Caco-2 (cell line): ENCODE measurements at regions of chr17 and their contacts with region 1.

Region 1: DNA sequence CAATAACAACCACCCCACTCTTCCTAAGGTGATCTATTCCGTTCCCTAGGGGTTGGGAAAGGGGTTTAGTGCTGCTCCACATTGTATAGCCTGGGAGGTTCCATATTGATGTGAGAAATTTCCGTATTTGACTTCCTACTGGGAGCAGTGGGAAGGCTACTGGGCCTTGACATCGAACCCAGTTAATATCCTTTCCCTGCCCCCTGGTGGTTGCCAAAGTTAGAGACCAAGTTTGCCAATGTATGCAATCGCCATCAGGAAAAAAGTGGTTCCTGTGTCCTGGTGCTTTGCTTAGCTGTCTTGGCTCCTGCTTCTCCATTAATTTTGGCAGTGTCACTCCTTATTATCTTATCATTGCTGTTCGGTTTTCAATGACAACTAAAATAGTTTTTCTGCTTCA is 914.9 kb downstream of the KCNJ2 start:
- DNase-seq: peak; percentile 56 to 62
- H3K4me3 ChIP-seq: no peak overlapping the region
- H3K4me3 Mint-ChIP-seq: no peak overlapping the region
- H3K27ac Mint-ChIP-seq: no peak overlapping the region
- H3K4me1 ChIP-seq: no peaks in the 10 kb centered on the region
- H3K4me1 Mint-ChIP-seq: no peaks in the 10 kb centered on the region
- H3K27me3 ChIP-seq: no peaks in the 10 kb centered on the region
- H3K27me3 Mint-ChIP-seq: peaks cover under 1% of the 10 kb centered on the region
- CTCF ChIP-seq: peak; percentile 29 to 54

Region 2: DNA sequence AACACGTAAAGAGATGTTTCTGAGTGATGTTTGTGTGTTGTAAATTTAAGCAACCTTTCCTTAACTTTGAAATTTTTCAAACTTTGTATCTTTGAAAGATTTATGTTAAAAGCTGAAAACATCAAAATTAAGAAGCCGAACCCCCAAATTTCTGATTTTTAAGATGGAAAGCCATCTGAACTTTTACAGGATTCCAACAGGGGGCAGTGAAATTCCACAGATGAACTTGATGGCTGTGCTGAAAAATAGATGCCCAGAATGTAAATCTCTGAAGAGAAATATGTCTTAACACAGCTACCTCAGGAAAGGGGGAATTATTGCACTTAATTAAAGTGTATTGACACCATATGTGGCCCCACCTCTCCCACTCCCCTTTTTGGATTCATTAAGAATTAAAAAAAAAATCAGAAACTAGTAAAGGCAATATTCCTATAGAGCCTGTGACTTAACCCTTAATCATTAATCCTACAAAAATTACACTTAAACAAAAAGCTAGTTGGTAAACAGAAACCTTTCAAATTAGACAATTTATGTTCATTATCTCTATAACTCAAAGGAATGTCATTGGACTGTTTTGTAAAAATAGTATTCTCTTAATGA is 317.0 kb before region 1 on chr17:
- CTCF ChIA-PET with region 1: interaction called, 4 read pairs
- POLR2A ChIA-PET with region 1: no interaction called
- intact Hi-C with region 1: loop called (anchors 1 kb)
- DNase-seq: peak in 1 of 2 experiments; percentile 42
- H3K4me3 ChIP-seq: no peak overlapping the region
- H3K4me3 Mint-ChIP-seq: no peak overlapping the region
- H3K27ac Mint-ChIP-seq: no peak overlapping the region
- H3K4me1 ChIP-seq: no peaks in the 10 kb centered on the region
- H3K4me1 Mint-ChIP-seq: no peaks in the 10 kb centered on the region
- H3K27me3 ChIP-seq: no peaks in the 10 kb centered on the region
- H3K27me3 Mint-ChIP-seq: peaks cover 3% of the 10 kb centered on the region
- CTCF ChIP-seq: peak; percentile 74 to 78

Region 3: DNA sequence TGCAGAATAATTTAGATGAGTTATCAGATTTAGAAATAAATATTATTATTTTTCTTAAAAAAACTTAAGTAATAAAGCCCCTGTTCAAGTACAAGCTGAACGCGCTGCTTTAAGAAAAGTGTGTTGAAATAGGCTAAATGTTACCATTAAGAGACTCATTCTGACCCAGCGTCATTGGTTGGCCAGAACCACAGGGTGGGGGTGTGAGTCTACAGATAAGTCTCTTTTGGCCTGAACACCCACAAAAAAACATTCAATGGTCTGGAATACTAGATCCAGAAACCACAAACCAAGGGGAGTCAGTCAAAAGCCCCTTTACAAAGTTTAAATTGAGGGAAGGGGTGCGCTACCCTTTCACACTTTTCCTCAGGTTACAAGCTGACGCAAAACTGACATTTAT is 138.8 kb before region 1 on chr17:
- CTCF ChIA-PET with region 1: no interaction called
- POLR2A ChIA-PET with region 1: no interaction called
- intact Hi-C with region 1: loop called (anchors 5 kb)
- DNase-seq: no peak
- H3K4me3 ChIP-seq: no peak overlapping the region
- H3K4me3 Mint-ChIP-seq: no peak overlapping the region
- H3K27ac Mint-ChIP-seq: no peak overlapping the region
- H3K4me1 ChIP-seq: no peaks in the 10 kb centered on the region
- H3K4me1 Mint-ChIP-seq: no peaks in the 10 kb centered on the region
- H3K27me3 ChIP-seq: no peaks in the 10 kb centered on the region
- H3K27me3 Mint-ChIP-seq: no peaks in the 10 kb centered on the region
- CTCF ChIP-seq: no peak

Region 4: DNA sequence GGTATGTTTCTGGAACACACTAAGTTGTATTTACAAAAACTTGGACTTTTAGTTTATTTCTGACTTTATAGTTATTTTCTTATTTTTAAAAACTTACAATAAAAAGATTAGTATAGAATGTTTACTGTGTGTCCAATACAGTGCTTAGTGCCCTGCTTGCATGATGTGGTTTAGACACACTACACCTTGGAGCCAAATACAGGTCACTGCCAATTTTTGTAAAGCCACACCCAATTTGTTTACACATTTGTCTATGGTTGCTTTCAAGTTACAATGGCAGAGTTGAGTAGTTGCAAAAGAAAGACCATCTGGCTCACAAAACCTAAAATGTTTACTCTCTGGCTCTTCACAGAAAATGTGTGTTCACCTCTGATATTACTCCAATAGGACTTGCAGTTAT is 107.8 kb before region 1 on chr17:
- CTCF ChIA-PET with region 1: no interaction called
- POLR2A ChIA-PET with region 1: no interaction called
- intact Hi-C with region 1: no loop called
- DNase-seq: no peak
- H3K4me3 ChIP-seq: no peak overlapping the region
- H3K4me3 Mint-ChIP-seq: no peak overlapping the region
- H3K27ac Mint-ChIP-seq: no peak overlapping the region
- H3K4me1 ChIP-seq: no peaks in the 10 kb centered on the region
- H3K4me1 Mint-ChIP-seq: no peaks in the 10 kb centered on the region
- H3K27me3 ChIP-seq: no peaks in the 10 kb centered on the region
- H3K27me3 Mint-ChIP-seq: peaks cover 14% of the 10 kb centered on the region
- CTCF ChIP-seq: no peak

Region 5: DNA sequence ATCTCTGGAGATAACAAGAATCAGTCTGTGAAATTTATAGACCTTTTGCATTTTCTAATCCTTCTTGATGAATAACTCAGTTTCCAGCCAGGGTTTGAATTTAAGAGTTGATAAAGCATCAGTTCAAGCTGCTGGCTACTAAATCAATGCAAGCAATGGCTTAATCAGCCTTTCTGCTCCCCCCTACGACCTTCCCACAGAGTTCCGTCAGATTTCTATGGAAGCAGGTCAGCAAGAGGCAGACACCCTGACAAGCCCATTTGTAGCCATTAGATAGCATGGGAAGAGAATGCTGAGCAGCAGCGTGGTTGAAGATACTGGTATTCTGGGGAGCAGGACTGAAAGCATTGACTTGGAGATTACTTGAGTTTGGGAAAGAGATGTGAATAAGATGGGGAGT is 46.8 kb before region 1 on chr17:
- CTCF ChIA-PET with region 1: no interaction called
- POLR2A ChIA-PET with region 1: no interaction called
- intact Hi-C with region 1: no loop called
- DNase-seq: no peak
- H3K4me3 ChIP-seq: no peak overlapping the region
- H3K4me3 Mint-ChIP-seq: no peak overlapping the region
- H3K27ac Mint-ChIP-seq: no peak overlapping the region
- H3K4me1 ChIP-seq: no peaks in the 10 kb centered on the region
- H3K4me1 Mint-ChIP-seq: no peaks in the 10 kb centered on the region
- H3K27me3 ChIP-seq: no peaks in the 10 kb centered on the region; the same call in 1 of the 2 replicates
- H3K27me3 Mint-ChIP-seq: peaks cover 3% of the 10 kb centered on the region
- CTCF ChIP-seq: no peak